ENCODE measurements at regions of chr1 and their contacts with region 1.

Region 1: DNA sequence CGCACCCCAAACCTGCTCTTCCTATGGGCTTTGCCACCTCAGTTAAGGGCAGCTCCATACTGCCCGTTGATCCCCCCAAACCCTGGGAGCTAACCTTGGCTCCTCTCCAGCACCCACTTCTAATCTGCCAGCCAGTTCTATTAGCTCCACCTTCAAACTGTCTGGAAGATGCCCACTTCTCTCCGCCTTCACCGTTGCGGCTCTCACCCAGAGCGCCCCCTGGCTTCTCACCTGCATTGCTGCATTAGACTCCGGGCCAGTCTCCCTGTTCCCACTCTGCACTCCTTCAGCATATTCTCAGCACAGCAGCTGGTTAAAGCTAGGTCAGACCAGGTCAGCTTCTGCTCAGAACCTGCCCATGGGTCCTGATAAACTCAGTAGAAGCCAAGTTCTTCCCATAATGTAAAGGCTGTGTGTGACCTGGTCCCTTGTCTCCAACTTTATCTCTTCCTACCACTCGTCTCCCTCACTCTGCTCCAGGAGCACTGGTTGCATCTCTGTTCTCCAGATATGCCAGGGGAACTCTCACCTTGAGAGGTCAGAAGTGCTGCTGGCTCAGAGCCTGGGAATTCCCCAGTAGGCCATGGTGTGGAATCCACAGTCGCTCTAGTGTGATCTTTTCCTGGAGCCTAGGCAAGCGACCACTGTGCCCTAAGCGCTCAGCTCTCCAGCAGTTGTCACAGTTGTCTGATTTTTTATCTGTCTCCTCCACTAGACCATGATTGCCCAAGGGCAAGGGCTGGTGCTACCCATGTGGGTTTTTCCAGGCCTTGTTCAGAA is 150.3 kb downstream of the HMGB4 start:
- DNase-seq: peak; percentile 81
- ATAC-seq: peak; percentile 96
- H3K4me3 Mint-ChIP-seq: no peak overlapping the region
- H3K27ac Mint-ChIP-seq: no peak overlapping the region
- H3K4me1 Mint-ChIP-seq: peaks cover 7% of the 10 kb centered on the region
- H3K27me3 Mint-ChIP-seq: no peaks in the 10 kb centered on the region
- CTCF ChIP-seq: peak; percentile 85

Region 2: GRCh38 chr1:33940093-33940492 is 74.1 kb before region 1 on chr1:
- CTCF ChIA-PET with region 1: no interaction called
- POLR2A ChIA-PET with region 1: no interaction called
- DNase-seq: no peak
- ATAC-seq: no peak
- H3K4me3 Mint-ChIP-seq: no peak overlapping the region
- H3K27ac Mint-ChIP-seq: no peak overlapping the region
- H3K4me1 Mint-ChIP-seq: no peaks in the 10 kb centered on the region
- H3K27me3 Mint-ChIP-seq: no peaks in the 10 kb centered on the region
- CTCF ChIP-seq: no peak

Region 3: DNA sequence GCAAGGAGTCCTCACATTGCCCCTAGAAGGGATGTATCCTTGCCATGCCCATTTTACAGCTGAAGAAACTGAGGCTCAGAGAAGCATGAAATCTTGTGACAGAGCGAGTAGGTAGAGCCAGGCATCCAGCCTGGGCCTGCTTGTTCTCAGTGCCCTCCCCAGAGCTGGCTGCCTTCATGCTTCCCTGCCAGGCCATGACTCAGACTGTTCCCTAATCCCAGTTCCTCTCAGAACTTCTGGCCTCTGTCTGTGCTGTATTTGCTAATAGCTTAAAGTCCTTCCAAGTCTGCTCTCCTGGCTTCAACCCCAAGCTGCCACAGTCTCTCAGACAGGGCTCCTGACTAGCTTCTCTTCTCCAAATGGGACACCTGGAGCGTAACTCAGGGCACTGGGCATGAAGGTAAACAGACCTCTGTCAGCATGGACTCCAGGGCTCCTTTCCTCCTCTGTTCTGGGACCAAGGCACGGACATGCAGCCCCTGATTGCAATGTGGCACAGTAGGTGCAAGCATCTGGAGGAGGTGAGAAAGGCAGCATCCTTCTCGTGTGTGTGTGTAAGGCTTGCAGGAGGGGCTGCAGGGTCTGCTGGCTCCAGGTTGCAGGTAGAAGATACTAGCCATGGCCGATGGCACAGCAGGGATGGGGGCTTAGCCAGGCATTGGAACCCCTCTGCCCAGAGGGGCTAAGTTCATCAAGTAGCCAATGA is 27.6 kb before region 1 on chr1:
- CTCF ChIA-PET with region 1: interaction called, 26 read pairs
- POLR2A ChIA-PET with region 1: no interaction called
- DNase-seq: no peak
- ATAC-seq: no peak
- H3K4me3 Mint-ChIP-seq: no peak overlapping the region
- H3K27ac Mint-ChIP-seq: no peak overlapping the region
- H3K4me1 Mint-ChIP-seq: 0 out of 2 replicates have a peak, but pooled peaks cover 5% of the 10 kb centered on the region
- H3K27me3 Mint-ChIP-seq: no peaks in the 10 kb centered on the region
- CTCF ChIP-seq: no peak

Region 4: DNA sequence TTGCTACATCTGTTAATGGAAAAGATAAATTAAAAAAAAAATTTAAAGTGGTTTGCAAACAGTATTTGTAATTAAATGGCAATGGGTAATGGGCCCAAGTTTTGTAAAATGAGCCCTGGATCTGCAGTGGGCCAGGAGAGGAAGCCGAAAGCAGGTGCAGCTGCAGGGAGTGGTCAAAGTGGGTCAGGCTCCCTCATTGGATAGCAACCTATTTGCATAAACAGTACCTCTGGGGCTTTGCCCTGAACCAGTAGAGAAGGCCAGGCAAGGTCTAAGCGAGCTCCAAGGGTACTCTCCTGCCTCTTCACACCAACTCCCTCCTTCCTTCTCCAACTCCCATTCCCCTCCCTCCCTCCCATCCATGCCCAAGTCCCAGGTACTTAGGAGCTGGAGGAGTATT is 11.3 kb before region 1 on chr1:
- CTCF ChIA-PET with region 1: interaction called, 50 read pairs
- POLR2A ChIA-PET with region 1: no interaction called
- DNase-seq: no peak
- ATAC-seq: peak; percentile 96
- H3K4me3 Mint-ChIP-seq: no peak overlapping the region
- H3K27ac Mint-ChIP-seq: no peak overlapping the region
- H3K4me1 Mint-ChIP-seq: peaks cover 20% of the 10 kb centered on the region
- H3K27me3 Mint-ChIP-seq: no peaks in the 10 kb centered on the region
- CTCF ChIP-seq: no peak

Region 5: DNA sequence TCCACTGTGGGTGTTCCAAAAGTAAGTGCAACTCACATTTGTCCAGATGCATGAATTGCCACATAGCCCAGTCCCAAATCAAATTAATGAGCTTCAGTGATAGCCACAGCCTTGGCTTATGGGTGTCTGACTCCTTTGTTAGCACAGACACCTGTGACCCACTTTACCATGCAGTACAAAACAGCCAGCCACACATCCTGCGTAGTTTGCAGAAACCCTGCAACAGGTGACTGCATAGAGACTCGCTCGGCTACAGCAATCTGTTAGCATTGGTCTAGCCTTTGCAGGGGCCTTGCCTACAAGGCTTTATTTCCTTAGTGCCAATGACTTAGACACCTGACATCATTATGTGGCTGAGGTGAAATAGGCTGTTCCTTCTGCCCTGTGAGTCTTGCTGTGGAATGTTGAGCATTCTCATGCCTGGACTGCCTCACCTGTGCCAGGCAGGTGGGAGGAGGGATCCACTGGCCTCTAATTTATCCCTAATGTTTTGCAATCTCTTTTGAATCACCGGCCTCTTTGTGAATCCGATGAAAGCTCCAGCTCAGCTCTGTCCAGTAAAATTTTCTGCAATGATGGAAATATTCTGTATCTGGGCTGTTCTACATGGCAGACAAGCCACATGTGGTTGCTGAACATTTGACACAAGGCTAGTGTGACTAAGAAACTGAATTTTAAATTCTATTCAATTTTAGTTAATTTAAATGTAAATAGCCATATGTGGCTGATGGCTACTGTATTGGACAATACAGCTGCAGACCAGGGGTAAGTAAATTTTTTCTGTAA is 15.6 kb after region 1 on chr1:
- CTCF ChIA-PET with region 1: interaction called, 16 read pairs
- POLR2A ChIA-PET with region 1: no interaction called
- DNase-seq: no peak
- ATAC-seq: no peak
- H3K4me3 Mint-ChIP-seq: no peak overlapping the region
- H3K27ac Mint-ChIP-seq: no peak overlapping the region
- H3K4me1 Mint-ChIP-seq: no peaks in the 10 kb centered on the region
- H3K27me3 Mint-ChIP-seq: no peaks in the 10 kb centered on the region
- CTCF ChIP-seq: no peak

Region 6: DNA sequence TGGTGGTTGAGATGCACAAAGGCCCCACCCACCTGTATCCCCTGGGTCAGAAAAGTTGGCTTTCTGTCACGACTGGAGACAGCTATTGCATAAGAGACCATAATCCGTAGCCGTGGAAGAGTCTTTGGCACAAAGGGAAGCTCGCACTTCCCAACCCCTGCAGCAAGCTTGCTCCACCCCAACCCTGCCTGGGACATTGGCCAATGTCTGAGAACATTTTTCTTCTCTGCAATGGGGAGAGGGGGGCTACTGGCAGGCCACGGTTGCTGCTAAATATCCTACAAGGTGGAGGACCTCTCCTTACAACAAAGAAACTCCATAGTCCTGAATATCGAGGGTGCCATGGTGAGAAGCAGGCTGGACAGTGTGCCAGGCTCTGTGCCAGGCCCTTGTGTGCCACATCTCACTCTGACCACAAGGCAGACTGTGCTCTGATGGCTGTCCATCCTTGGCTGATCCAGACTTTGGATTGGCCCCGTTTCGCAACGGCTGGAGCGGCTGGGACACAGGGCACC is 46.8 kb after region 1 on chr1:
- CTCF ChIA-PET with region 1: interaction called, 23 read pairs
- POLR2A ChIA-PET with region 1: no interaction called
- DNase-seq: no peak
- ATAC-seq: no peak
- H3K4me3 Mint-ChIP-seq: no peak overlapping the region
- H3K27ac Mint-ChIP-seq: no peak overlapping the region
- H3K4me1 Mint-ChIP-seq: peaks cover 20% of the 10 kb centered on the region
- H3K27me3 Mint-ChIP-seq: no peaks in the 10 kb centered on the region
- CTCF ChIP-seq: no peak

Region 7: DNA sequence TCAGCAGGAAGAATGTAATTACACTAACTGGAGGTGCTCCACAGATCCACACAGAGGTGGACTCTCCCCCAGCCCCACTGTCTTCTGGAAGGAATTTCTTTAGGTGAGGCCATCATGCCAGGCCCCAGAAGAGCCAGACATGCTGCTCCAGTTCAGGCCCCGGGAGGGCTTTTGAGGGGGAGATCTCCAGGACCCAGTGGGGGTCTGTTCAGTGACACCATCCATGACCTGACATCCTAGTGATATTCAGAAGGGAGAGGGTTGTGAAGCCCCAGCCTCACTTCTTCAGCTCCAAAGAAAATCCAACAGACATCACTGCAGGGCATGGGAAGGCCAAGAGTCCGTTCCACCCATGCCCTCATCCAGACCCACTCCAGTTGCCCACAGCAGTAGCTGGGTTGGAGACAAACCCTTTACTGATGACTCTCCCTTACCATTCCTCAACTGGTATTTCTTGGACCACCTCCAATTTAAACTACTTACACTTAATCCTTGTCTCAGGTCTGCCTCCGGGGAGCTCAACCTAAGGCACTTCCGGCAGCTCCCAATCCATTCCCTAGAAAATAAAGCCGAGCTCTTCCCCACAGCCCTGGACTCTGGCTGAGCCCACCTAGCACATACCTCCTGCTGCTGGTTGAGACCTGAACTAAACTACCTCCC is 111.7 kb after region 1 on chr1:
- CTCF ChIA-PET with region 1: no interaction called
- POLR2A ChIA-PET with region 1: no interaction called
- DNase-seq: no peak
- ATAC-seq: no peak
- H3K4me3 Mint-ChIP-seq: no peak overlapping the region
- H3K27ac Mint-ChIP-seq: no peak overlapping the region
- H3K4me1 Mint-ChIP-seq: peaks cover 6% of the 10 kb centered on the region; the same call in 1 of the 2 replicates
- H3K27me3 Mint-ChIP-seq: no peaks in the 10 kb centered on the region
- CTCF ChIP-seq: no peak

Measured in WTC11 (cell line).